HEK293 (cell line): ENCODE measurements at regions of chr1 and their contacts with region 1.

Region 1: DNA sequence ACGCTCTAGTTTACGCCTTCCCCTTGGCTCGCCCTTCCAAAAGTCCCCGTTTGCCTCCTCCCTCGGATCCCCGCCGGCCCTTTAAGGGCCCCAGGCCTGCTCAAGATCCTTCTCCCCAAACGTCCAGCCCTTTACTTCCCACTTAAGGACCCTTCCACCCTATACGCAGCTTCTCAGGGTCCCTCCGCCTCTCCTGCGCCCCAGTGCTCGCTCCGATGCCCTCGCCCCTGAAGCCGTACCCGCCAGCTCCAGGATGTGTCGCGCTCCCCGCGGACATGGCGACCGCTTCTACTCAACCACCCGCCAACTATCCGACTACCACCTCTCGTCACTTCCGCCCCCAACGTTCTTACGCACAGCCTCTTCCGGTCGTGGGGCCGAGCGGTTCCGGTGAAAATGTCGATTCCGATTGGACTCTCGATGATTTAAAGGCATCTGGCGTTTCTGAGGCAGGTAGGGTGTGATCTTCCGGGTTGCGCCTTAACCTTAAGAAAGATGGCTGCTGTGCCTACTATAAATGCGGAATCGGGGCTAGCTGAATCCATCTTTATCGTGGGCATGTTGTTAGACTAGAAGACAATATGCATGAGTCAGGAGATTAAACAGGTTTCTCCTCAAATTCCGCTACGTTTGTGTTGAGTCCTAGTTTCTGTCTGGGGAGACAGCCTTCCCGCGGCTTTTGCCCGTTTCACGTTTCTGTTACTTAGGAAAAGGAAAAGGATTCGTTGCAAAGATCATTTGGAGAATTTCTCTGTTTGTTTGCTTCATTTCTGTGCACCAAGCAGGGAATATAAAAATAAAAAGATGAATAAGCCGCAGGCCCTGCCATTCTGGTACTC is at the start of gene KHDC4:
- H3K4me3 ChIP-seq: peak within 1 kb of the TSS; percentile 94
- H3K27ac ChIP-seq: peak within 1 kb of the TSS; percentile 81
- H3K4me1 ChIP-seq: no peaks in the 10 kb centered on the region; the same call in none of the 2 replicates
- CTCF ChIP-seq: peak; percentile 17; the same call in 1 of the 2 replicates

Region 2: GRCh38 chr1:155920717-155921116 is 13.6 kb before region 1 on chr1:
- CTCF ChIA-PET with region 1: interaction called, 5 read pairs
- POLR2A ChIA-PET with region 1: interaction called, 21 read pairs
- H3K4me3 ChIP-seq: no peak overlapping the region
- H3K27ac ChIP-seq: no peak overlapping the region
- H3K4me1 ChIP-seq: no peaks in the 10 kb centered on the region
- CTCF ChIP-seq: no peak

Region 3: DNA sequence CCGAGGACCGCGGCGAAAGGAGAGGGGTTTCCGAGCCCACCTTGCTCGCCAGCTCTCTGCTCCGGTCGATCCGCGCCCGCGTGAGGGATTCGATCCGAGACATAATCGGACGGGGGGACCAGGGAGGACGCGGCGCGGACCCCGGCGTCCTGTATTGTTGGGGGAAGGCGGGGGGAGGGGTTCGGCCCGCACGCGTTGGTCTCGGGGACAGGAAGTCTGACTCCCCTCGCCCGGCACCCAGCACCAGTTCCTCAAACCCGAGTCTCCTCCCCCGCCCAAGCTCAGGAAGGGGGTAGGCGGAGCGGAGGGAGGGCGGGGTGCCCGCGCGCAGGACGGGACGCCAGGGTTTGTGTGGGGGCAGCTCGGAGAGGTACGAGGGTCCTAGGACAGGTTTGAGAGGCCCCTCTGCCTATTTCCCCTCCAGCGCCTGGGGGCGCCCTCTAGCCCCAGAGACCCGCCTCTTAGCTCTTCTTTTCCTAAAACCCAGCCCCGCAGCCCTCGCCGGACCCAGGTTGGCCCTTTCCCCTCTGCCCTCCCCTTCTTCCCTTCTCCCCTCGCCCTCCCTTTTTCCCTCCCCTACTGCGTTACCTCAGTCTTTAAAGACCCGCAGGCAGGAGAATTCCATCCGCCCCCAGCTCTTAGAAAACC is 44.1 kb after region 1 on chr1 and contains the start of gene ARHGEF2:
- CTCF ChIA-PET with region 1: interaction called, 24 read pairs
- POLR2A ChIA-PET with region 1: interaction called, 28 read pairs
- H3K4me3 ChIP-seq: peak within 1 kb of the TSS; percentile 91
- H3K27ac ChIP-seq: peak within 1 kb of the TSS; percentile 97
- H3K4me1 ChIP-seq: peaks cover 36% of the 10 kb centered on the region
- CTCF ChIP-seq: peak; percentile 68; the same call in 1 of the 2 replicates

Region 4: GRCh38 chr1:155989242-155990004 is 55.1 kb after region 1 on chr1:
- CTCF ChIA-PET with region 1: interaction called, 104 read pairs
- POLR2A ChIA-PET with region 1: interaction called, 8 read pairs
- H3K4me3 ChIP-seq: no peak overlapping the region
- H3K27ac ChIP-seq: no peak overlapping the region
- H3K4me1 ChIP-seq: no peaks in the 10 kb centered on the region
- CTCF ChIP-seq: peak; percentile 97

Region 5: GRCh38 chr1:155996166-155996565 is 61.9 kb after region 1 on chr1:
- CTCF ChIA-PET with region 1: interaction called, 104 read pairs
- POLR2A ChIA-PET with region 1: interaction called, 11 read pairs
- H3K4me3 ChIP-seq: no peak overlapping the region
- H3K27ac ChIP-seq: no peak overlapping the region
- H3K4me1 ChIP-seq: no peaks in the 10 kb centered on the region
- CTCF ChIP-seq: no peak

Region 6: GRCh38 chr1:156129706-156130581 is 195.6 kb after region 1 on chr1:
- CTCF ChIA-PET with region 1: interaction called, 10 read pairs
- POLR2A ChIA-PET with region 1: no interaction called
- H3K4me3 ChIP-seq: no peak overlapping the region
- H3K27ac ChIP-seq: peak overlapping the region; percentile 21
- H3K4me1 ChIP-seq: peaks cover 6% of the 10 kb centered on the region
- CTCF ChIP-seq: peak; percentile 93